Prostate gland (tissue), 2 donors: ENCODE measurements at regions of chrX and their contacts with region 1.

Region 1: DNA sequence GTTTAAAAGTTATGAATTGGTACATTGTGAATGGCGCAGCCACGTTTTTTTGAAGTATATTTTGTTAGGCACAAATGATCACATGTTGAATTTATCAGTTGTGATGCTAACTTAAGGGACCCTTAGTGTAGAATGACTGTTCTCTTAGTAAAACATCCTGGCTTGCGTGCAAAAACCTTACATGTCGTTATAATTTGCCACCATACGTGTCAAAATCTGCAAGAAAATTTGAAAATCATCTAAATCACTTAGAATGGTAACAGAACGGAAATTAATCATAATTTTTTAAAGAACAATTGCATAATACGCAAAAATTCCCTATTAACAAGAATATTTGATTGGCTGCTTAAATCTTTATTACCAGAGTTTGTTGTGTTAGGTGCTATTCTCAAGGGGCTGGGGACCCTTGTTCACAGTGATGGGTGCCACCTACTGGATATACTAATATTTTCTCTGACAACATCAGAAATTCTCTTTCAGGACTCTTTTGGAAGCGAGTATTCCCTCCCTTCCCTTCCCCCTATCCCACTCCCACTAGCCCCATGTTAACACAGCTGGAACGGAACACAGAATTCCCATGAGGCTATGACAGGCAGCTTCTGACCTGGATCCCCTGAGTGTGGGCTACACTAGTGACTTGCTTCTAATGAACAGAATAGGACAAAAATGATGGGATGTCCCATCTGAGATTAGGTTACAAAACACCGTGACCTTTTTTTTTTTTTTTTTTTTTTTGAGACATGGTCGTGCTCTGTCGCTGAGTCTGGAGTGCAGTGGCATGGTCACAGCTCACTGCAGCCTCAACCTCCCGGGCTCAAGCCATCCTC is 71.8 kb downstream of the SUPT20HL2 start:
- DNase-seq: no peak
- H3K4me3 ChIP-seq: no peak overlapping the region
- H3K27ac ChIP-seq: no peak overlapping the region
- H3K4me1 ChIP-seq: no peaks in the 10 kb centered on the region
- H3K27me3 ChIP-seq: no peaks in the 10 kb centered on the region
- CTCF ChIP-seq: peak in 3 of 4 experiments; percentile 36 to 37 (median 36)
- POLR2A ChIP-seq: no peak

Region 2: GRCh38 chrX:24150051-24150790 is 91.8 kb before region 1 on chrX:
- intact Hi-C with region 1: loop called (anchors 5 kb)
- DNase-seq: peak; percentile 84
- H3K4me3 ChIP-seq: peak overlapping the region; percentile 49 to 54
- H3K27ac ChIP-seq: peak overlapping the region; percentile 93 to 94
- H3K4me1 ChIP-seq: no peaks in the 10 kb centered on the region
- H3K27me3 ChIP-seq: no peaks in the 10 kb centered on the region
- CTCF ChIP-seq: peak; percentile 30 to 70 (median 50)
- POLR2A ChIP-seq: peak; percentile 34